CD8-positive, alpha-beta memory T cell (primary cell): ENCODE measurements at regions of chr12 and their contacts with region 1.

Region 1: DNA sequence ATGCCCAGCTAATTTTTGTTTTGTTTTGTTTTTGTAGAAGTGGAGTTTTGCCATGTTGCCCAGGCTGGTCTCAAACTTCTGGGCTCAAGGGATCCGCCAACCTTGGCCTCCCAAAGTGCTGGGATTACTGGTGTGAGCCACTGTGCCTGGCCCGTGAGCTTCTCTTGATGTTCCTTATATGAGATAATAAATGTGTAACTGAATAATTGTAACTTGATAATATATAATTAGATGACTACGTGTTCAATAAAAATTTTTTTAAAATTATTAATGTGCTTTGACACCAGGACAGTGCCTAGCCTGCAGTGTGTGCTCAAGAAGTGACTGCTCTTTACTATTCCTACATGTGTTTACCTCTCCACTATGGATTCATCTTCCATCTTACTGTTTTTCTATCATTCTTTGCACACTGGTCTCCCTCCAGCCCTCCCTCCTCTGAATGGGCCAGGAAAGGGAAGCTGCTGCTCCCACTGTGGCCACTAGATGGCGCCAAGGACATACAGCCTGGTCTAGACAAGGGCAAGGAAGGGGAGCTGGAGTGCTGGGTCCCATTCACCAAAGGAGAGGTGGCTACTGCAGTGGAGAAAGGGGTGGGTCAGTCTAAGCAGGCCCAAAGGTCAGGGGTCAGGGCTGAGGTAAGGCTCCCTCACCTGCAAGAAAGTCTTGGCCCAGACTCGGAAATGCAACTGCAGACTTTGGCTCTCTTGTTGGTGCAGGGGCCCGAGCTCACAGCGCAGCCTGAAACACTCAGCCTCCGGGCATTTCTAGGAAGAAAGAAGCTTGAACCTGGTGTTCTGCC is 14.7 kb upstream of the ZNF385A start:
- DNase-seq: peak; percentile 77 to 91 (median 82)
- H3K4me3 ChIP-seq: no peak overlapping the region
- H3K4me3 Mint-ChIP-seq: no peak overlapping the region
- H3K27ac ChIP-seq: no peak overlapping the region
- H3K27ac Mint-ChIP-seq: peak overlapping the region; percentile 7 to 92 (median 44)
- H3K4me1 ChIP-seq: peaks cover 12% of the 10 kb centered on the region
- H3K4me1 Mint-ChIP-seq: peaks cover 10 to 23% (median 15%) of the 10 kb centered on the region in 3 donors
- H3K27me3 ChIP-seq: no peaks in the 10 kb centered on the region
- H3K27me3 Mint-ChIP-seq: no peaks in the 10 kb centered on the region

Region 2: GRCh38 chr12:54368709-54369583 is 30.2 kb before region 1 on chr12:
- CTCF ChIA-PET with region 1: interaction called, 10 read pairs
- POLR2A ChIA-PET with region 1: no interaction called
- DNase-seq: peak; percentile 75 to 91 (median 80)
- H3K4me3 ChIP-seq: peak overlapping the region; percentile 56
- H3K4me3 Mint-ChIP-seq: peak overlapping the region; percentile 34 to 77 (median 62)
- H3K27ac ChIP-seq: no peak overlapping the region
- H3K27ac Mint-ChIP-seq: peak overlapping the region in 7 of 8 donors; percentile 10 to 86 (median 62)
- H3K4me1 ChIP-seq: peaks cover 21% of the 10 kb centered on the region
- H3K4me1 Mint-ChIP-seq: peaks cover 22 to 34% (median 28%) of the 10 kb centered on the region in 3 donors
- H3K27me3 ChIP-seq: no peaks in the 10 kb centered on the region
- H3K27me3 Mint-ChIP-seq: peaks cover 0 to 2% of the 10 kb centered on the region in 2 donors

Region 3: DNA sequence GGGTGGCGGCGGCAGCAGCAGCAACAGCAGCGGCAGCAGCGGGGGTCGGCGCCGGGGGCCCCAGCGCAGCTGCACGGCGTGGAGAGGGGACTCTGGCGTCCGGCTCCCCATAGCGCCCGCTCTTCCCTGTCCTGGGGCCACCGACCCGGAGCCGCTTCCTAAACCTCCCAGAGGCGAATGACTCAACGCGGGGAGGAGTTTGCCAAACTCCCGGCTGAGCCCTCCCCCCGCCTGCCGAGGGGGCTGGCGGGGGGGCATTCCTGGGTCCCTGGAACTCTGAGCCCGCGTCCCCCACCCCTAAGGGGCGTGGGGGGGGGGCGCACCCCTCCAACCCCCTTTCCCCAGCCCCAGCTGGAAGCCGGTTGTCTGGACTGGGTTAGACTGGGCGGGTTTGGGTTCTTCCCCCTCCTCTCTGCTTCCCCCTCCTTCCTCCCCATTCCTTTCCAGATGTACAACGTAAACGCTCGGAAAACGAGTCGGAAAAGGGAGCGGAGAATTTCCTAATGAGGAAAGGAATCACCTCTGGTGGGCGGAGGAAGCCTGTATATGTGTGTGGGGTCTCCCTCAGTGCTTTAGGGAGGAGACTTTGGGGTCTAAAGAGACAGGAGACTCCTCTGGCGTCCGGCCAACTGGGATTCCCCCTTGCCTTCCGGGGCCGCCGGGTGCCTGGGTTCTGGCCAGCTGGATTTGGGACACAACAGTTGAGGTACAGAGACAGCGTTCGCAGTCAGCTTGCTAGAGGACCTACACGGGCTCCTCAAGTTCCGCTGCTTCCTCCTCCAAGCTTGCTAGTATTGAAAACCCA is 20.1 kb after region 1 on chr12 and contains the start of gene ITGA5:
- CTCF ChIA-PET with region 1: interaction called, 279 read pairs
- POLR2A ChIA-PET with region 1: interaction called, 7 read pairs
- DNase-seq: peak in 4 of 5 donors; percentile 41 to 66 (median 52)
- H3K4me3 ChIP-seq: peak within 1 kb of the TSS; percentile 89
- H3K4me3 Mint-ChIP-seq: peak within 1 kb of the TSS; percentile 71 to 99 (median 94)
- H3K27ac ChIP-seq: peak within 1 kb of the TSS; percentile 91
- H3K27ac Mint-ChIP-seq: peak within 1 kb of the TSS; percentile 93 to 100 (median 96)
- H3K4me1 ChIP-seq: peaks cover 52% of the 10 kb centered on the region
- H3K4me1 Mint-ChIP-seq: peaks cover 48 to 65% (median 57%) of the 10 kb centered on the region in 3 donors
- H3K27me3 ChIP-seq: no peaks in the 10 kb centered on the region
- H3K27me3 Mint-ChIP-seq: peaks cover 0 to 13% of the 10 kb centered on the region in 2 donors
- total RNA-seq, gene ITGA5: 23.2 to 25.7 TPM

Region 4: GRCh38 chr12:54431911-54432814 is 33.0 kb after region 1 on chr12:
- CTCF ChIA-PET with region 1: interaction called, 386 read pairs
- POLR2A ChIA-PET with region 1: no interaction called
- DNase-seq: no peak
- H3K4me3 ChIP-seq: no peak overlapping the region
- H3K4me3 Mint-ChIP-seq: peak overlapping the region in 6 of 7 donors; percentile 23 to 84 (median 62)
- H3K27ac ChIP-seq: peak overlapping the region; percentile 28
- H3K27ac Mint-ChIP-seq: peak overlapping the region in 7 of 8 donors; percentile 29 to 83 (median 68)
- H3K4me1 ChIP-seq: peaks cover 37% of the 10 kb centered on the region
- H3K4me1 Mint-ChIP-seq: peaks cover 42 to 50% (median 43%) of the 10 kb centered on the region in 3 donors
- H3K27me3 ChIP-seq: no peaks in the 10 kb centered on the region
- H3K27me3 Mint-ChIP-seq: peaks cover 1 to 7% of the 10 kb centered on the region in 2 donors

Region 5: DNA sequence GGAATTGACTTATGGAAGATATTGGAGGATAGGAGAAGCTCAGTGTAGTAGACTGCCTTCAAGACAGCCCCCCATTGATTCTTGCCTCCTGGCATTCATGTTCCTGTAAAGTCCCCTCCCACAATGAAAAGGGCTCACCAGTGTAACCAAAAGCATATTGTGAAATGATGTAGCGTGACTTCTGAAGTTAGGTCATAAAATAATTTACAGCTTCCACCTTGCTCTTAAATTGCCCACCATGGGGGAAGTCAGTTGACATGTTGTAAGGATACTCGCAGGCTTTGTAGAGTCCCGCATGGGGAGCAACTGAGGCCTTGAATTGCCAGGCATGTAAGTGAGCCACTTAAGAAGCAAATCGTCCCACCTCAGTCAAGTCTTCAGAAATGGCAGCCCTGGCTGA is 49.1 kb after region 1 on chr12:
- CTCF ChIA-PET with region 1: interaction called, 72 read pairs
- POLR2A ChIA-PET with region 1: no interaction called
- DNase-seq: no peak
- H3K4me3 ChIP-seq: no peak overlapping the region
- H3K4me3 Mint-ChIP-seq: no peak overlapping the region
- H3K27ac ChIP-seq: no peak overlapping the region
- H3K27ac Mint-ChIP-seq: no peak overlapping the region
- H3K4me1 ChIP-seq: no peaks in the 10 kb centered on the region
- H3K4me1 Mint-ChIP-seq: no peaks in the 10 kb centered on the region
- H3K27me3 ChIP-seq: no peaks in the 10 kb centered on the region
- H3K27me3 Mint-ChIP-seq: peaks cover 0 to 4% of the 10 kb centered on the region in 2 donors

Region 6: DNA sequence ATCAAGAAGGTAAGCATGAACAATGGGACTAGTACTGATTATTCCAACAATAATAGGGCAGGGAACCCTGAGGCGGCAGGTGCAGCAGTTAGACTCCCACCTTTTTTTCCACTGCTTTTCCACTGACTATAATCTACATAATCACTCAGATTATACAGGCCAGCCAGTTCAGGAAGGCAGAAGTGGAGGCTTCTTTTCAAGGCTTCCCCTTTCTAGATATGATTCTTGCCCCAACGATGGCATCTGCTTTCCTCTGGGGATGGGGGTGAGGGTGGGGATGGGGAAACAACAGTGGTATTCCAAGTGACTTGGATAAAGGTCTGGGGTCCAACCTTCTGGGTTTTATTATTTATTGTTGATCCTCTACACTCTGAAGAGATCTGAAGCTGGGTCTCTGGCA is 98.7 kb after region 1 on chr12:
- CTCF ChIA-PET with region 1: interaction called, 16 read pairs
- POLR2A ChIA-PET with region 1: interaction called, 5 read pairs
- DNase-seq: no peak
- H3K4me3 ChIP-seq: peak overlapping the region; percentile 80
- H3K4me3 Mint-ChIP-seq: peak overlapping the region; percentile 91 to 100 (median 99)
- H3K27ac ChIP-seq: peak overlapping the region; percentile 52
- H3K27ac Mint-ChIP-seq: peak overlapping the region; percentile 88 to 100 (median 98)
- H3K4me1 ChIP-seq: peaks cover 39% of the 10 kb centered on the region
- H3K4me1 Mint-ChIP-seq: peaks cover 46 to 54% (median 48%) of the 10 kb centered on the region in 3 donors
- H3K27me3 ChIP-seq: no peaks in the 10 kb centered on the region
- H3K27me3 Mint-ChIP-seq: no peaks in the 10 kb centered on the region